Caco-2 (cell line): ENCODE measurements at regions of chr3 and their contacts with region 1.

Region 1: DNA sequence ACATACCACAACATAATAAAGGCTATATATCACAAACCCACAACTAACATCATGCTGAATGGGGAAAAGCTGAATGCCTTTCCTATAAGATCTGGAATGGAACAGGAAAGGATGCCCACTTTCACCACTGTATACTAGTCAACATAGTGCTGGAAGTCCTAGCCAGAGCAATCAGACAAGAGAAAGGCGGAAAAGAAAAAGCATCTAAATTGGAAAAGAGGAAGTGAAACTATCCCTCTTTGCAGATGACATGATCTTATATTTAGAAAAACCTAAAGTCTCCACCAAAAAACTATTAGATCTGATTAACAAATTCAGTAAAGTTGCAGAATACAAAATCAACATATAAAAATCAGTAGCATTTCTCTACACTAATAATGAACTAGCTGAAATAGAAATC is 14.6 kb upstream of the PIK3CA start:
- DNase-seq: no peak
- H3K4me3 ChIP-seq: no peak overlapping the region
- H3K4me3 Mint-ChIP-seq: no peak overlapping the region
- H3K27ac Mint-ChIP-seq: no peak overlapping the region
- H3K4me1 ChIP-seq: no peaks in the 10 kb centered on the region
- H3K4me1 Mint-ChIP-seq: no peaks in the 10 kb centered on the region
- H3K27me3 ChIP-seq: no peaks in the 10 kb centered on the region
- H3K27me3 Mint-ChIP-seq: peaks cover 8% of the 10 kb centered on the region
- CTCF ChIP-seq: no peak

Region 2: DNA sequence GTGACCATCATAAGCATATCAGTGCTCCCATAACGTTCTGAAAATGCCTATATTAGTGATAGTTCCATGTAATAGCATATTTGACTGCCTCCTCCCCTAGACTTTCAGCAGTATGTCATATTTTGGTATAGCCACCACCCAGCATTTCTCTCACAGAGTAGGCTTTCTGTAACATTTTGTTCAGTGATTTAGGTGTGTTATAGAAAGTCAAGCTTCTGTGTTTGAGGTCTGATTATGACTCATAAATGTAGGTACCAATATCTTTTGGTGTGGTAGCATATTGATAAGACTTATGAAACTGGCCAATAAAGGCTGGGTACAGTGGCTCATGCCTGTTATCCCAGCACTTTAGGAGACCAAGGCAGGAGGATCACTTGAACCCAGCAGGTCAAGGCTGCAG is 27.7 kb before region 1 on chr3:
- CTCF ChIA-PET with region 1: no interaction called
- POLR2A ChIA-PET with region 1: no interaction called
- intact Hi-C with region 1: loop called (anchors 2 kb)
- DNase-seq: no peak
- H3K4me3 ChIP-seq: no peak overlapping the region
- H3K4me3 Mint-ChIP-seq: no peak overlapping the region
- H3K27ac Mint-ChIP-seq: no peak overlapping the region
- H3K4me1 ChIP-seq: no peaks in the 10 kb centered on the region
- H3K4me1 Mint-ChIP-seq: no peaks in the 10 kb centered on the region
- H3K27me3 ChIP-seq: no peaks in the 10 kb centered on the region
- H3K27me3 Mint-ChIP-seq: peaks cover 10% of the 10 kb centered on the region
- CTCF ChIP-seq: no peak

Region 3: GRCh38 chr3:179116816-179117215 is 16.8 kb before region 1 on chr3:
- CTCF ChIA-PET with region 1: no interaction called
- POLR2A ChIA-PET with region 1: no interaction called
- intact Hi-C with region 1: no loop called
- DNase-seq: no peak
- H3K4me3 ChIP-seq: no peak overlapping the region
- H3K4me3 Mint-ChIP-seq: no peak overlapping the region
- H3K27ac Mint-ChIP-seq: no peak overlapping the region
- H3K4me1 ChIP-seq: no peaks in the 10 kb centered on the region
- H3K4me1 Mint-ChIP-seq: no peaks in the 10 kb centered on the region
- H3K27me3 ChIP-seq: no peaks in the 10 kb centered on the region
- H3K27me3 Mint-ChIP-seq: peaks cover 8% of the 10 kb centered on the region
- CTCF ChIP-seq: no peak